Mammary epithelial cell (primary cell): ENCODE measurements at regions of chr2 and their contacts with region 1.

Region 1: GRCh38 chr2:177964892-177965291 is 107.7 kb downstream of the PDE11A start:
- DNase-seq: no peak
- H3K4me3 ChIP-seq: no peak overlapping the region
- H3K27ac ChIP-seq: no peak overlapping the region
- H3K4me1 ChIP-seq: no peaks in the 10 kb centered on the region
- H3K27me3 ChIP-seq: peaks cover 2% of the 10 kb centered on the region
- CTCF ChIP-seq: no peak

Region 2: DNA sequence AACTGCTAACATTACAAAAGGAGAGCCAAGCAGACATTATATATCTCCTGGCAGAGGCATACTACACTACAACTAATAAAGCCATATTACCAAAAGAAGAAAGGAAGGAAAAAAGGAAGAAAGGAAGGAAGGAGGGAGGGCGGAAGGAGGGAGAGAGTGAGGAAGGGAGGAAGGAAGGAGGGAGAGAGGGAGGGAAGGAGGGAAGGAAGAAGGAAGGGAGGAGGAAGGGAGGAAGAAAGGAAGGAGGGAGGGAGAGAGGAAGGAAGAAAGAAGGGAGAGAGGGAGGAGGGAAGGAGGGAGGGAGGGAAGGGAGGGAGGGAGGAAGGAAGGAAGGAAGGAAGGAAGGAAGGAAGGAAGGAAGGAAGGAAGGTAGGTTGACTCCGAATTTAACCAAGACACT is 25.7 kb before region 1 on chr2:
- CTCF ChIA-PET with region 1: no interaction called
- dilution Hi-C with region 1: no loop called
- in situ Hi-C with region 1: no loop called
- intact Hi-C with region 1: no loop called
- DNase-seq: no peak
- H3K4me3 ChIP-seq: no peak overlapping the region
- H3K27ac ChIP-seq: no peak overlapping the region
- H3K4me1 ChIP-seq: no peaks in the 10 kb centered on the region
- H3K27me3 ChIP-seq: no peaks in the 10 kb centered on the region
- CTCF ChIP-seq: no peak

Region 3: DNA sequence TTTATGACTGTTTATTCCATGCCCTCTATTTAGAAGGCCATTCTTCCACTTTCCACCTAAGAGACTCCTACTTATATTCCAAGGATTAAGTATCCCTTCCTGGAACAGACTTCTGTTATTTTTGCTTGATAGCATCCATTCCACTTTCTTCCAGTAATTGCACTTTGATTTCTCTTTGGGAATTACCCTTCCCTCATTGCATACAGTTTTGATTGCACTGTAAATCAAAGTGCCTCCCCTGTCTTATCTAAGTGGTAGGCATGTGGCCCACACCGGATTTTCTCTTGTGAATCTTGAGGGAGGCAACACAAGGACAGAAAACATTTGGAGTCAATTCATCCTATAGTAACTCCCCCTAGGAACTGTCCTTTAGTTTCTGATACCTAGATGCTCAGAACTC is 12.7 kb before region 1 on chr2:
- CTCF ChIA-PET with region 1: no interaction called
- dilution Hi-C with region 1: no loop called
- in situ Hi-C with region 1: no loop called
- intact Hi-C with region 1: no loop called
- DNase-seq: no peak
- H3K4me3 ChIP-seq: no peak overlapping the region
- H3K27ac ChIP-seq: no peak overlapping the region
- H3K4me1 ChIP-seq: no peaks in the 10 kb centered on the region
- H3K27me3 ChIP-seq: no peaks in the 10 kb centered on the region
- CTCF ChIP-seq: no peak

Region 4: DNA sequence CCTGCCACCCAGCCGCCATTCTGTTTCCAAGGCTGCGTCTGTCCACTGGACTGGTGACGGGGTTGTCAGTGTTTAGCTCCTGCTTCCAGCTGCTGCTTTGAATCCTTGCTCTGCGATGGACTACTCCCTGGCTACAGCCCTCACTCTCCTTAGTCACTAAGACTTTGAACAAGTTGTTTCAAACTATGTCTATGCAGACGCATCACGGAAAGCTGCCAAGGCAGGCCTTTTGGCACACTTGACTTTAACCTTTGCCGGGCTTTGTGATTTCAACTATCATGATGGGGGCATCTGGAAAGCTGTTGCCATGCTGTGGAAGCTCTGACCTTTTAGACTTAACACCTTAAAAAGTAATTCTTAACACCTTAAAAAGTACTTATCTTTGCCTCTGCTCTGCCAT is 53.2 kb after region 1 on chr2:
- CTCF ChIA-PET with region 1: no interaction called
- dilution Hi-C with region 1: loop called (anchors 5 kb)
- in situ Hi-C with region 1: no loop called
- intact Hi-C with region 1: no loop called
- DNase-seq: no peak
- H3K4me3 ChIP-seq: no peak overlapping the region
- H3K27ac ChIP-seq: no peak overlapping the region
- H3K4me1 ChIP-seq: no peaks in the 10 kb centered on the region
- H3K27me3 ChIP-seq: no peaks in the 10 kb centered on the region
- CTCF ChIP-seq: no peak